CD8-positive, alpha-beta T cell (primary cell): ENCODE measurements at regions of chr2 and their contacts with region 1.

Region 1: GRCh38 chr2:83168377-83168776 is 1290.7 kb downstream of the SUCLG1 start:
- DNase-seq: no peak
- ATAC-seq: no peak
- H3K4me3 ChIP-seq: no peak overlapping the region
- H3K4me3 Mint-ChIP-seq: no peak overlapping the region
- H3K27ac ChIP-seq: no peak overlapping the region
- H3K27ac Mint-ChIP-seq: no peak overlapping the region
- H3K4me1 ChIP-seq: no peaks in the 10 kb centered on the region
- H3K4me1 Mint-ChIP-seq: no peaks in the 10 kb centered on the region
- H3K27me3 ChIP-seq: no peaks in the 10 kb centered on the region
- H3K27me3 Mint-ChIP-seq: no peaks in the 10 kb centered on the region
- CTCF ChIP-seq: no peak

Region 2: GRCh38 chr2:83217862-83218261 is 49.5 kb after region 1 on chr2:
- CTCF ChIA-PET with region 1: no interaction called
- POLR2A ChIA-PET with region 1: no interaction called
- intact Hi-C with region 1: loop called in 1 of 2 experiments (anchors 5 kb)
- DNase-seq: no peak
- ATAC-seq: no peak
- H3K4me3 ChIP-seq: no peak overlapping the region
- H3K4me3 Mint-ChIP-seq: no peak overlapping the region
- H3K27ac ChIP-seq: no peak overlapping the region
- H3K27ac Mint-ChIP-seq: no peak overlapping the region
- H3K4me1 ChIP-seq: no peaks in the 10 kb centered on the region
- H3K4me1 Mint-ChIP-seq: no peaks in the 10 kb centered on the region
- H3K27me3 ChIP-seq: no peaks in the 10 kb centered on the region
- H3K27me3 Mint-ChIP-seq: no peaks in the 10 kb centered on the region
- CTCF ChIP-seq: no peak